ENCODE measurements at regions of chr1 and their contacts with region 1.

Region 1: GRCh38 chr1:196372896-196373536 is 235.2 kb downstream of the KCNT2 start:
- DNase-seq: no peak
- ATAC-seq: no peak
- H3K4me3 ChIP-seq: no peak overlapping the region
- H3K27ac ChIP-seq: no peak overlapping the region
- H3K4me1 ChIP-seq: no peaks in the 10 kb centered on the region
- H3K27me3 ChIP-seq: no peaks in the 10 kb centered on the region
- CTCF ChIP-seq: peak; percentile 25 to 63 (median 52)

Region 2: GRCh38 chr1:196344453-196344852 is 28.6 kb before region 1 on chr1:
- intact Hi-C with region 1: loop called in 1 of 10 experiments (anchors 1 kb)
- DNase-seq: no peak
- ATAC-seq: no peak
- H3K4me3 ChIP-seq: no peak overlapping the region
- H3K27ac ChIP-seq: no peak overlapping the region
- H3K4me1 ChIP-seq: no peaks in the 10 kb centered on the region
- H3K27me3 ChIP-seq: no peaks in the 10 kb centered on the region
- CTCF ChIP-seq: no peak

Region 3: GRCh38 chr1:196462086-196462485 is 89.1 kb after region 1 on chr1:
- intact Hi-C with region 1: no loop called
- DNase-seq: no peak
- ATAC-seq: no peak
- H3K4me3 ChIP-seq: no peak overlapping the region
- H3K27ac ChIP-seq: no peak overlapping the region
- H3K4me1 ChIP-seq: no peaks in the 10 kb centered on the region
- H3K27me3 ChIP-seq: no peaks in the 10 kb centered on the region
- CTCF ChIP-seq: no peak